ENCODE measurements at regions of chr12 and their contacts with region 1.

Region 1: DNA sequence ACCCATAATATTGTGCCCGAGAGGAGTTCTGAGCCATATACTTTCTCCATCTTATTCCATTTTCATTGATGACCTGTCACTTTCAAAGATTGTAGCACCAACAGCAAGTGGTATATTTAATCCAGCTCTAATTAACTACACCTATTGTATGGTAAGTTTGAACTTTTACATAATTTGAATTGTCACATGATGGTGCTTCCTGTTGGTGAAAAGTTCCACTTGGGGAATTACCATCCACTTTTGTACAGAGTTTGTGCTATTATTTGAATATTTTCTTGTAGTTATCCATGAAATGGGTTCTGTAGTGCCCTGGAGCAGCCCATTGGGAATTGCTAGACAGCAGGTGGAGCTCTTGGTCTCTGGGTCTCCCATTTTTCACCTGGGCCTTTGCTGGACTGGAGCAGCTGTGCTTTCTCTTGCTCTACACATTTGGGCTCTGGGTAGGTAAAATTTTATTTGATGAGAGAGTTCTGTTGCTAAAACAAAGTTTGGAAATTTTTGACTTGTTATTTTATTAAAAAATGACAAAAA is 3.0 kb downstream of the SMCO3 start:
- DNase-seq: peak; percentile 44
- ATAC-seq: peak; percentile 90
- H3K4me3 ChIP-seq: no peak overlapping the region
- H3K27ac ChIP-seq: no peak overlapping the region
- H3K4me1 ChIP-seq: peaks cover 10% of the 10 kb centered on the region
- H3K27me3 ChIP-seq: no peaks in the 10 kb centered on the region
- CTCF ChIP-seq: peak; percentile 76
- EP300 ChIP-seq: no peak
- POLR2A ChIP-seq: no peak
- RAD21 ChIP-seq: peak; percentile 71

Region 2: GRCh38 chr12:14635776-14636175 is 175.2 kb before region 1 on chr12:
- CTCF ChIA-PET with region 1: no interaction called
- POLR2A ChIA-PET with region 1: no interaction called
- in situ Hi-C with region 1: no loop called
- intact Hi-C with region 1: no loop called
- DNase-seq: no peak
- ATAC-seq: no peak
- H3K4me3 ChIP-seq: no peak overlapping the region
- H3K27ac ChIP-seq: no peak overlapping the region
- H3K4me1 ChIP-seq: no peaks in the 10 kb centered on the region
- H3K27me3 ChIP-seq: no peaks in the 10 kb centered on the region
- CTCF ChIP-seq: no peak
- EP300 ChIP-seq: no peak
- POLR2A ChIP-seq: no peak
- RAD21 ChIP-seq: no peak

Region 3: GRCh38 chr12:14731821-14732220 is 79.2 kb before region 1 on chr12:
- CTCF ChIA-PET with region 1: no interaction called
- POLR2A ChIA-PET with region 1: no interaction called
- in situ Hi-C with region 1: no loop called
- intact Hi-C with region 1: no loop called
- DNase-seq: no peak
- ATAC-seq: no peak
- H3K4me3 ChIP-seq: no peak overlapping the region
- H3K27ac ChIP-seq: no peak overlapping the region
- H3K4me1 ChIP-seq: no peaks in the 10 kb centered on the region
- H3K27me3 ChIP-seq: no peaks in the 10 kb centered on the region; a peak in 1 of 5 replicates
- CTCF ChIP-seq: no peak
- EP300 ChIP-seq: no peak
- POLR2A ChIP-seq: no peak
- RAD21 ChIP-seq: no peak

Region 4: DNA sequence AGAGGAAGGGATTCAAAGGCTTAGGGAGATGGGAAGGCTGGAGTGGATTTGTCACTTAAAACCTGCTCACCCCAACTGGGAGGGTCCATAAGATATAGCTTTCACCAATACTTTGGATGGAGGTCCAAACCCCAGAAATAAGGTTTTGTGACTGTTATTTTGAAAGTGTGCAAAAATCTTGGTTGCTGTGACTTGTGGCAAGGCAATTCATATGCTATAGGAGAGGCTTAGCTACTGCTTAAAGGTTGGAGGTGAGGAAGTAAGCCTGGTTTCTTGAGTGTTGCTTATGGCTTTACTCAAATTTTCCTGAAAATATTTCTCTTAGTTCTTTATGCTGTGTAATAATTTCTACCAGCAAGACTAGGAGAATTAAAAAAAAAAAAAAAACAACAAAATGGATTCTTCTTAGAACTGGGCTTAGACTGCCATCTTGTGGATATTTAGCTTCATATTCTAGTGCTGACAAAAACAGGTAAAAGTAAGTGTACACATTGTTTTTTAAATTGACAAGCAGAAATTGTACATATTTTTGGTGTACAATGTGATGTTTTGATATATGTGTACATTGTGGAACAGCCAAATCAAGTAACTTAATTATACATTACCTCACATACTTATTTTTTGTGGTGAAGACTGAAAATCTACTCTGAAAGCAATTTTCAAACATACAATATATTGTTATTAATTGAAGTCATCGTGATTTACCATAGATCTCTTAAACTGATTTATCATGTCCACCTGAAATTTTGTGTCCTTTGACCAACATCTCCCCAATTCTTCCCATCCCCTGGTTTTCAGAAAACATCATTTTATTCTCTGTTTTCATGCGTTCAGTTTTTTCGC is 184.8 kb after region 1 on chr12:
- CTCF ChIA-PET with region 1: interaction called, 23 read pairs
- POLR2A ChIA-PET with region 1: no interaction called
- in situ Hi-C with region 1: loop called (anchors 5 kb)
- intact Hi-C with region 1: loop called (anchors 1 kb)
- DNase-seq: peak; percentile 52
- ATAC-seq: no peak
- H3K4me3 ChIP-seq: no peak overlapping the region
- H3K27ac ChIP-seq: no peak overlapping the region
- H3K4me1 ChIP-seq: no peaks in the 10 kb centered on the region
- H3K27me3 ChIP-seq: peaks cover 0 to 2% of the 10 kb centered on the region in 2 experiments; a peak in 1 of 5 replicates
- CTCF ChIP-seq: peak; percentile 63
- EP300 ChIP-seq: no peak
- POLR2A ChIP-seq: no peak
- RAD21 ChIP-seq: no peak